ENCODE measurements at regions of chr22 and their contacts with region 1.

Region 1: GRCh38 chr22:27008454-27008853 is 351.1 kb downstream of the MIAT start:
- DNase-seq: no peak
- H3K4me3 ChIP-seq: no peak overlapping the region
- H3K4me3 Mint-ChIP-seq: no peak overlapping the region
- H3K27ac Mint-ChIP-seq: no peak overlapping the region
- H3K4me1 ChIP-seq: no peaks in the 10 kb centered on the region
- H3K4me1 Mint-ChIP-seq: no peaks in the 10 kb centered on the region
- H3K27me3 ChIP-seq: no peaks in the 10 kb centered on the region
- H3K27me3 Mint-ChIP-seq: no peaks in the 10 kb centered on the region
- CTCF ChIP-seq: no peak

Region 2: GRCh38 chr22:26751217-26751616 is 257.2 kb before region 1 on chr22:
- CTCF ChIA-PET with region 1: no interaction called
- POLR2A ChIA-PET with region 1: no interaction called
- intact Hi-C with region 1: loop called (anchors 5 kb)
- DNase-seq: no peak
- H3K4me3 ChIP-seq: no peak overlapping the region
- H3K4me3 Mint-ChIP-seq: no peak overlapping the region
- H3K27ac Mint-ChIP-seq: no peak overlapping the region
- H3K4me1 ChIP-seq: no peaks in the 10 kb centered on the region
- H3K4me1 Mint-ChIP-seq: no peaks in the 10 kb centered on the region
- H3K27me3 ChIP-seq: no peaks in the 10 kb centered on the region
- H3K27me3 Mint-ChIP-seq: peaks cover 5% of the 10 kb centered on the region
- CTCF ChIP-seq: no peak